Dorsolateral prefrontal cortex (tissue), 120 donors: ENCODE measurements at regions of chr21 and their contacts with region 1.

Region 1: DNA sequence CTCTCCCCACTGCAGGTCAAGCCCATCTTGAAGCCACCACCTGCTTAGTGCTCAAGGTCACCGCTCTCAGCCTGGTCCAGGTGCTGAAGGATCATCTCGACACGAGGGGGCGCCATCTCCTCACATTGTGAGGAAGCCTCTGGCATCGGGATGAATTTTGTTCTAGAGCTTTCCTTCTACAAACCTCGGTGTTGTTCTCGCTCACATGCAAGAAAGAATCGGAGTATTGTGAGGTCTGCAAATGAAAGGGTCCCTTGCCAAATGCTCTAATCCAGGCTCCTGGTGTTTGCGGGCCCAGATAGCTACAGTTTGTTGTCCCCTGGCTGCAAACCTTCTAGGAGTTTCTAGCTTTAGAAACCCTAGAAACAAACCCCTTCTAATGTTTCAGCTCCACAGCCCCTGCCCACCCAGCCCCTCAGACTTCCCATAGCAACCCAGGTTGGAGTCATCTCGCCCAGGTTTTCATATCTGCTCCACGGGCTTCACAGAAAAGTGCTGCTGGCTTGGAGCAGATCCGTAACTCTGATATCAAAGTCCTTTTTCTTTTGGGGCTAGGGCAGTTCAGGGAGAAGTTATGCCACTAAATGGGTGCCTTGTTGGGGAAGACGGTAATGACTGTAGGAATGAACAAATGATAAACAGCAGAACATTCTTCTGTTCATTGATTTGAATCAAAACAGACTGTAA is 8.6 kb upstream of the ATP5PO start:
- DNase-seq: peak; percentile 84 to 94 (median 90)
- H3K4me3 ChIP-seq: peak overlapping the region in 18 of 59 donors; percentile 5 to 43 (median 24)
- H3K27ac ChIP-seq: peak overlapping the region; percentile 51 to 98 (median 91)
- H3K27me3 ChIP-seq: no peaks in the 10 kb centered on the region
- CTCF ChIP-seq: peak; percentile 81 to 99 (median 97)

Region 2: DNA sequence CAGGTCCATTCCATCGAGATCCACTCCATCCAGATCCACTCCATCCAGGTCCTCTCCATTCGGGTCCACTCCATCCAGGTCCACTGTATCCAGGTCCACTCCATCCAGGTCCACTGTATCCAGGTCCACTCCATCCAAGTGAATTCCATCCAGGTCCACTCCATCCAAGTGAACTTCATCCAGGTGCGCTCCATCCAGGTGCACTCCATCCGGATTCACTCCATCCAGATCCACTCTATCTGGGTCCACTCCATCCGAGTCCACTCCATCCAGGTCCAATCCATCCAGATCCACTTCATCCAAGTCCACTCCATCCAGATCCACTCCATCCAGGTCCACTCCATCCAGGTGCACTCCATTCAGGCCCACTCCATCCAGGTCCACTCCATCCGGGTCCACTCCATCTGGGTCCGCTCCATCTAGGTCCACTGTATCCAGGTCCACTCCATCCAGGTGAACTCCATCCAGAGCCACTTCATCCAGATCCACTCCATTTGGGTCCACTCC is 1894.0 kb before region 1 on chr21:
- intact Hi-C with region 1: no loop called
- DNase-seq: no peak
- H3K4me3 ChIP-seq: no peak overlapping the region
- H3K27ac ChIP-seq: no peak overlapping the region
- H3K27me3 ChIP-seq: peaks cover 0 to 2% (median 0%) of the 10 kb centered on the region in 45 donors
- CTCF ChIP-seq: no peak

Region 3: DNA sequence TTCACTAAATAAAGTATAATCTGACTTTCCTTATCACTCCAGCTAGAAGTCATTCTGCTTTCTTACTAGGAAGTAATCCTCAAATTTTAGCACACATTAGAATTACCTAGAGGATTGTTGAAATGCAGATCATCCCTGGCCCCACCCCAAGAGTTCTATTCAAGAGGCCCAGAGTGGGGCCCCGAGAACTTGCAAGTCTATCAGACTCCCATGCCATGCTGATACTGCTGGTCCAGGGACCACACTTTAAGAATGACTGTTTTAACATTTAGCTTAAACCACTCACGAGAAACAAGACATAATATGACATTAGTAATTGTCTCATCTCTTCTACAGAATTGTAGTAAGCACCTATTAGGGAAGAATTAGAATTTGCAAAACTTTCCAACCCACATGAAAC is 1188.7 kb before region 1 on chr21:
- intact Hi-C with region 1: no loop called
- DNase-seq: no peak
- H3K4me3 ChIP-seq: no peak overlapping the region
- H3K27ac ChIP-seq: no peak overlapping the region
- H3K27me3 ChIP-seq: no peaks in the 10 kb centered on the region
- CTCF ChIP-seq: no peak

Region 4: GRCh38 chr21:33578959-33579542 is 345.2 kb before region 1 on chr21:
- intact Hi-C with region 1: no loop called
- DNase-seq: no peak
- H3K4me3 ChIP-seq: no peak overlapping the region
- H3K27ac ChIP-seq: peak overlapping the region in 16 of 59 donors; percentile 7 to 62 (median 24)
- H3K27me3 ChIP-seq: no peaks in the 10 kb centered on the region
- CTCF ChIP-seq: no peak

Region 5: DNA sequence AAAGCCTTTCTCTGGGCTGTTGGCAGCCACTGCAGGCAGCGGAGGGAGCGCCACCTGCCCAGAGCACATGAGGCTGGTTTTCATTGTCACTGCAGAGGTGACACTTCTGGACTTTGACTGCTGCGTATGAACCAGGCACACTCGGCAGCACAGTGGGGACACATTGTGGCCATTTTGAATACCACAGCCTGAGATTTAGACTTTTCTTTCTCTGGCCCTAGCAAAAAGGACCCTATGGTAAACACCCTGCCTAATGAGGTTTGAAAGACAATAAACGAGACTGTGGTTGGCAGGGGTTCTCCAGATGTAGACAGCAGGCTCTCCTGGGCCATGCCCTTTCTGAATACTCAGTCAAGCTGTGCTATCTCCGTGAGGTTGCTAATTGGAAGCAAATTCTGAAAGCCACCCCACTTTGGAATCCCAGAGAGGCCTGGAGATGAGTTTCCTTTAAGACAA is 427.6 kb after region 1 on chr21:
- intact Hi-C with region 1: loop called (anchors 1 to 2 kb)
- DNase-seq: peak in 9 of 10 donors; percentile 43 to 71 (median 63)
- H3K4me3 ChIP-seq: no peak overlapping the region
- H3K27ac ChIP-seq: peak overlapping the region in 18 of 59 donors; percentile 2 to 66 (median 36)
- H3K27me3 ChIP-seq: no peaks in the 10 kb centered on the region
- CTCF ChIP-seq: peak; percentile 67 to 93 (median 82)